Activated naive CD4-positive, alpha-beta T cell treated with anti-CD3 and anti-CD28 coated beads for 36 hours (primary cell): ENCODE measurements at regions of chr4 and their contacts with region 1.

Region 1: GRCh38 chr4:149370785-149371420 is 444.7 kb downstream of the IQCM start:
- DNase-seq: no peak
- H3K4me3 Mint-ChIP-seq: no peak overlapping the region
- H3K27ac Mint-ChIP-seq: no peak overlapping the region
- H3K4me1 Mint-ChIP-seq: no peaks in the 10 kb centered on the region
- H3K27me3 Mint-ChIP-seq: peaks cover 3% of the 10 kb centered on the region

Region 2: GRCh38 chr4:149897783-149898182 is 526.9 kb after region 1 on chr4:
- CTCF ChIA-PET with region 1: no interaction called
- intact Hi-C with region 1: loop called (anchors 2 kb)
- DNase-seq: no peak
- H3K4me3 Mint-ChIP-seq: no peak overlapping the region
- H3K27ac Mint-ChIP-seq: no peak overlapping the region
- H3K4me1 Mint-ChIP-seq: no peaks in the 10 kb centered on the region
- H3K27me3 Mint-ChIP-seq: no peaks in the 10 kb centered on the region